ENCODE measurements at regions of chr6 and their contacts with region 1.

Region 1: GRCh38 chr6:2848851-2849250 is 7.2 kb upstream of the SERPINB1 start:
- DNase-seq: peak; percentile 84
- H3K4me3 Mint-ChIP-seq: peak overlapping the region; percentile 31
- H3K27ac Mint-ChIP-seq: peak overlapping the region; percentile 58
- H3K4me1 Mint-ChIP-seq: peaks cover 56% of the 10 kb centered on the region
- H3K27me3 Mint-ChIP-seq: no peaks in the 10 kb centered on the region

Region 2: DNA sequence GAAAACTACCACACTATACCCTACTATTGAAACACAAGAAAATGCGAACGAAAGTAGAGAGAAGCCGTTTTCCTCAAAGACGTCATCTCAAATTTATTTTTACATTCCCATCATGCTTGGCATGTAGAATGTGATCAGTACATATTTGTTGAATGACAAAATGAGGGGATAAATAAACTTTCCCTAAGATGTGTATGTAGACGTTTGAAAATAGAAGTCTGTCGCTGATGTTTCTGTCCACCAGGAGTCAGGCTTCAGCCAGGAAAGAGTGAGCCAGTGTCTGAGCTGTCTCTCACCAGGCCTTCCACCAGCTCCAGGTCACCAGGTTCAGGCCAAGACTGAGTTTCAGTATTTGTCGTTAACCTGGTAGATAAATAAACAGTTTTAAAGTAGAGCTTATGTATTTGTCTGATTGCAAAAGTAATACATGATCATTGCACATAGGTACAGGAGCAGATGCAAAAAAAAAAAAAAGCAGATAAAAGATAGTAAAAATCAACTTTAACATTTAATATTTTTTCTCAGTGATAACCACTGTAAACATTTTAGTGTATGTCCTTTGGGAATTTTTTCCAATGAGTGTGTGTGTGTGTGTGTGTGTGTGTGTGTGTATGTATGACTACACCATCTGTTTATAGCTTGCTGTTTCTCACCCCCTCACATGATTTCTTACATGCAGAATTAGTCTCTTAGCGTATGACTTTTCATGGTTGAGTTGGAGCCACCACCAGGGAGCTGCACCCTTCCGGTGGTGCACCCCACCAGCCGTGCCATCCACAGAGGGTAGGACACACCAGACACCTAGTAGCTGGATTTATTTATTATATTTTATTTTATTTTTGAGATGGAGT is 57.5 kb before region 1 on chr6:
- CTCF ChIA-PET with region 1: interaction called, 49 read pairs
- DNase-seq: peak; percentile 76
- H3K4me3 Mint-ChIP-seq: no peak overlapping the region
- H3K27ac Mint-ChIP-seq: no peak overlapping the region
- H3K4me1 Mint-ChIP-seq: peaks cover 32% of the 10 kb centered on the region
- H3K27me3 Mint-ChIP-seq: no peaks in the 10 kb centered on the region

Region 3: DNA sequence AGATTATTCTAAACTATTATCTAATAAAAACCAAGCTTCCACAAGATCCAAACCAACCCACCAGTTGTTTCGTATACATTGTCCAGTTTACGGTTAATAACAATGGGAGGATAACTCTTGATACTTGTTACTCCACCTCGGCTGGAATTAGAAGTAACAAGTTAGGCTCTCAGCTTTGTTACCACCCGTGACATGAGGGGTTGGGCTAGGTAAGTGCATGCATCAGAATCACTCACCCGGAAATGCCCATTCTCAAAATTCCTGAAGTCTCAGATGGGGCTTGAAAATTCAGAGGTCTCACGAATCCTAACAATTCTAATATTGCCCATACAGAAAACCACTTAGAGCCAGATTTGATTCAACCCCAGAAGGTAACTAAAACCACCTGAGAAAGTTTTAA is 19.8 kb after region 1 on chr6:
- CTCF ChIA-PET with region 1: interaction called, 13 read pairs
- DNase-seq: no peak
- H3K4me3 Mint-ChIP-seq: no peak overlapping the region
- H3K27ac Mint-ChIP-seq: peak overlapping the region; percentile 8
- H3K4me1 Mint-ChIP-seq: peaks cover 40% of the 10 kb centered on the region
- H3K27me3 Mint-ChIP-seq: peaks cover 4% of the 10 kb centered on the region

Region 4: DNA sequence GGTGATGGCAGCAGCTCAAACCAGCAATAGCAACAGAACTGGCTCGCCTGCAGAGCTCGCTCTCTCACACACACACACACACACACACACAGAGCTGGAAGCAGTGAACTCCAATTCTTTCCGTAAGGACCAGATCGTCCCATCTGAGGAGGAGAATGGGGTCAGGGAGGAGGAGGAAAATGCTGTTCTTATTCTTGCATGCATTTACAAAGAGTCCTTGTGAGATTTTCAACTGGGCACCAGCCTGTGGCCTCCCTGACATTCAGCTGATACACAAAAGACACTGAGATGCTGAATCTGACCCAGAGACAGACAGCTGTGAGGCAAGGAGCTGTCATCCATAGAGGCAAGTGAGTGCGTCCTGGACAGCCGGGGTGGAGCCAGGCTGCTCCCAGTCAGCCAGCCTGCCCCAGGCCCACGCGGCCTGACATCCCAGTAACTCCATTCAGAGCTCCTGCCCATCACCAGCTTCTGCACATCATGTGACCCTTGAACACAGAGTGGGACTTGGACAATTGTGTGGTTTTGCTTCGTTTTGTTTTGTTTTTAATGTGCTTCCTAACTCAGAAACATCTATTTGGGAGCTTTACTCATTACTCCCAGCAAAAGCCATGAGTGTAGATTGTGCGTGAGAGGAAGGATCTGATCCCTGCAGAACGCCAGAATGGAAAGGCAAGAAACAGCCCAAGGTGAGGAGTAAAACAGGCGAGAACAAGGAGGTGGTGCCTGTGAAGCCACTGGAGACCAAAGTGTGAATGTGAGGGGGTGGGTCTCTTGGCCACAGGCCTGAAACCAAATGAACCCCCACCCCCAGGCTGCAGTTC is 52.2 kb after region 1 on chr6:
- CTCF ChIA-PET with region 1: interaction called, 21 read pairs
- DNase-seq: no peak
- H3K4me3 Mint-ChIP-seq: peak overlapping the region; percentile 100
- H3K27ac Mint-ChIP-seq: peak overlapping the region; percentile 86
- H3K4me1 Mint-ChIP-seq: peaks cover 60% of the 10 kb centered on the region
- H3K27me3 Mint-ChIP-seq: peaks cover 16% of the 10 kb centered on the region

Region 5: GRCh38 chr6:2917065-2917464 is 68.2 kb after region 1 on chr6:
- CTCF ChIA-PET with region 1: interaction called, 77 read pairs
- DNase-seq: no peak
- H3K4me3 Mint-ChIP-seq: no peak overlapping the region
- H3K27ac Mint-ChIP-seq: no peak overlapping the region
- H3K4me1 Mint-ChIP-seq: peaks cover 22% of the 10 kb centered on the region
- H3K27me3 Mint-ChIP-seq: peaks cover 18% of the 10 kb centered on the region

Region 6: GRCh38 chr6:2988426-2989331 is 139.8 kb after region 1 on chr6:
- CTCF ChIA-PET with region 1: interaction called, 26 read pairs
- DNase-seq: peak; percentile 84
- H3K4me3 Mint-ChIP-seq: peak overlapping the region; percentile 90
- H3K27ac Mint-ChIP-seq: peak overlapping the region; percentile 98
- H3K4me1 Mint-ChIP-seq: peaks cover 32% of the 10 kb centered on the region
- H3K27me3 Mint-ChIP-seq: peaks cover 16% of the 10 kb centered on the region

Measured in activated naive CD4-positive, alpha-beta T cell treated with anti-CD3 and anti-CD28 coated beads, Interleukin-2, amount 10 ng/mL, durations not matched to agents 7 days and 5 days (primary cell).